Prostate gland (tissue), 2 donors: ENCODE measurements at regions of chr2 and their contacts with region 1.

Region 1: GRCh38 chr2:12787891-12788801 is 71.4 kb downstream of the TRIB2 start:
- DNase-seq: no peak
- H3K4me3 ChIP-seq: no peak overlapping the region
- H3K27ac ChIP-seq: peak overlapping the region; percentile 28 to 41
- H3K4me1 ChIP-seq: no peaks in the 10 kb centered on the region
- H3K27me3 ChIP-seq: no peaks in the 10 kb centered on the region
- CTCF ChIP-seq: no peak
- POLR2A ChIP-seq: no peak

Region 2: GRCh38 chr2:12750166-12750905 is 37.8 kb before region 1 on chr2:
- intact Hi-C with region 1: no loop called
- DNase-seq: no peak
- H3K4me3 ChIP-seq: no peak overlapping the region
- H3K27ac ChIP-seq: no peak overlapping the region
- H3K4me1 ChIP-seq: no peaks in the 10 kb centered on the region
- H3K27me3 ChIP-seq: no peaks in the 10 kb centered on the region
- CTCF ChIP-seq: no peak
- POLR2A ChIP-seq: no peak

Region 3: DNA sequence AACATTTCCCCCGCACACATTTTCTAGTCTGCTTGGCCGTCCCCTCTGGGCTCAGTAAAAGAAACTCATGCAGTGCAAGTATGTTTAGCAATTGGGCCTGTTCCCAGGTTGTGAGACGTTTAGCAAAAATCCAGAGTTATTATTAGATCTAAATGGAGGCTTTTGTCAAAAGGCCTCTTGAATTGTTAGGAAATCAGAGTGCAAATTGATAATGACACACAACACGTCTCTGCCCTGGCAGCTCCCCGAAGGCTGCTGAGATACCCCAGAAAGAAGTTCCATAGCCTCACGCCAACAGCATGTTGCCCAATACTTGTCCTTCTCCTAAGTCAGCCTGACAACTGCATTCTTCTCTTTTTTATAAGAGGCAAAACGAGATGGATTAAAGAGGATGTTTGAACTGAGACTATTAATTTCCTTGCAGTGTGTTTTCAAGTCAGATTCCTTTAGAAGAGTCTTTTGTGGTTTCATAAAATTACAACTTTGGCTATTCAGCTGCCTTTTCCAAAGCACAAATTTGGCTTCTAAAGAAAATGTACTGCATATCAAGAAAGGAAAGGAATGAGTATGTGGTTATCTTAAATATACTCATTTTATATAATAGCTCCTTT is 130.8 kb after region 1 on chr2:
- intact Hi-C with region 1: loop called (anchors 5 kb)
- DNase-seq: peak; percentile 52
- H3K4me3 ChIP-seq: no peak overlapping the region
- H3K27ac ChIP-seq: peak overlapping the region; percentile 28 to 53
- H3K4me1 ChIP-seq: peaks cover 5% of the 10 kb centered on the region
- H3K27me3 ChIP-seq: no peaks in the 10 kb centered on the region
- CTCF ChIP-seq: no peak
- POLR2A ChIP-seq: no peak